ENCODE measurements at regions of chr6 and their contacts with region 1.

Region 1: GRCh38 chr6:37018198-37019064 is 13.0 kb downstream of the FGD2 start:
- DNase-seq: peak; percentile 85
- H3K4me3 ChIP-seq: no peak overlapping the region
- H3K27ac ChIP-seq: no peak overlapping the region
- H3K4me1 ChIP-seq: peaks cover 10% of the 10 kb centered on the region
- H3K27me3 ChIP-seq: no peaks in the 10 kb centered on the region
- CTCF ChIP-seq: peak; percentile 93 to 97
- POLR2A ChIP-seq: no peak

Region 2: DNA sequence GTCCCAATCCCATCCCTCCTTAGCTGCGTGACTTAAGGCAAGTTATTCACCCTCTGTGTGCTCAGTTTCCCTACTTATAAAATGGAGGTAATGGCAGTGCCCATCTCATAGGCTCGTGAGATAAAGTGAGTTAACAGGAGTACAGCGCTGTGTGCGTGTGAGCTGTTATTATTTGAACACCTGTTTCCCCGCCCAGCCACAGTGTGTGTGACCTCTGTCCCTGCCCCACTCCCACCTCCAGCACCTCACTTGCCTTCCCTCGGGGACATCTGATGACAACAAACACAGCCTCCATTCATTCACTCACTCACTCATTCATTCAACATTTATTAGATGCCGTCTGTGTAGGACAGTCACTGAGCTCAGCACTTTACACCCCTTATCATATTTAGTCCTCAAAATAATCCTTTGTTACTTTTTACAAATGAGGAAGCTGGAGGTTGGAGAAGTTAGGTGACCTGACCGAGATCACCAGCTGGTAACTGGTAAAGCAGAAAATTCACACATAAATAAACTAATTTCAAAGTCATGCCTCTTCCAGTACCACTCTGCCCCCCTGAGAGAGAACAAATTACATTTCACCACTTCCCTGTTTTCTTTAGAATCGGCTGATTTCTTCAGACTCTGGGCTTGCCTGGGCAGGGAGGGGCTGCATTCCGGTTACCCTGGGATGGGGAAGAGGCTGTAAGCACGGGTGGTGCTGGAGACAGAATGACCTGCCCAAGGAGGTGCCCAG is 237.8 kb before region 1 on chr6:
- CTCF ChIA-PET with region 1: interaction called, 11 read pairs
- POLR2A ChIA-PET with region 1: no interaction called
- dilution Hi-C with region 1: no loop called
- intact Hi-C with region 1: no loop called
- DNase-seq: no peak
- H3K4me3 ChIP-seq: no peak overlapping the region
- H3K27ac ChIP-seq: no peak overlapping the region
- H3K4me1 ChIP-seq: no peaks in the 10 kb centered on the region
- H3K27me3 ChIP-seq: no peaks in the 10 kb centered on the region
- CTCF ChIP-seq: no peak
- POLR2A ChIP-seq: no peak

Region 3: GRCh38 chr6:36885461-36886401 is 132.7 kb before region 1 on chr6 and contains the start of gene C6orf89:
- CTCF ChIA-PET with region 1: interaction called, 59 read pairs
- POLR2A ChIA-PET with region 1: no interaction called
- dilution Hi-C with region 1: no loop called
- intact Hi-C with region 1: loop called (anchors 1 kb)
- DNase-seq: peak; percentile 96
- H3K4me3 ChIP-seq: peak within 1 kb of the TSS; percentile 77 to 95 (median 84)
- H3K27ac ChIP-seq: peak within 1 kb of the TSS; percentile 76
- H3K4me1 ChIP-seq: peaks cover 12% of the 10 kb centered on the region
- H3K27me3 ChIP-seq: no peaks in the 10 kb centered on the region
- CTCF ChIP-seq: peak; percentile 78 to 84
- POLR2A ChIP-seq: peak; percentile 89
- total RNA-seq, gene C6orf89: 34.0 and 36.4 TPM in 2 replicates

Region 4: DNA sequence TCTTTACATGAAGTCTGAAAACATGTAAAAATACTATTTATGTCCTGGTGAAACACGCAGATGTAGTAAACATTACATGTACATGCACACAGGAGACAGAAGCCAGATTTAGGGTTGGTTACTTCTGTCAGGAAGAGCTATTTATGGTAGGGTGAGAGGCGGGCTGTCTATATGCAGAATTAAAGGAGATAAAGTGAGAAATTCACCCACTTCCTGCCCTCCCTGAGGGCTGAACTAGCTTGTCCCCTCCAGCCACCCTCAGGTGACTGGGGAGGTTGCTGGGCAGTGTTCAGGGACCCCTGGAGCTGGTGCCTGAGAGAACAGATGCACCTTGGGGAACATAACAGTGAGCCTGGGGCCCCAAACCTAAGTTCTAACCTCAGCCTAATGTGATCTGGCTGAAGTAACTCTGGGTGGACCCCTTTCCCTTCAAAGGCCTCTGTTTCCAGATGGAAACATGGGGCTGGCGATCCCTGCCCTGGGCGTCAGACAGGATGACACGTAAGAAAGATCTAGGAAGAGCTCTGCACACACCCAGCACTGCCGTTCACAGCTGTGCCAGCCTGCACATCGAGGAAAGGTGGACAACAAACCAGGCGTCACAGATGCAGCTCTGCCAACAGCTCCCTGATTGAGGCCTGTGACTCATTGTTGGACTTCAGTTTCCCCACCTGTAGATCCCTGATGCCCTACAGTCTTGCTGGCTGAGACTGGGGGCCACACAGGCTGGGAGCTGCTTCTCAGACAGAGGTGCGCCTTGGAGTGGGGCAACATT is 62.6 kb before region 1 on chr6:
- CTCF ChIA-PET with region 1: interaction called, 15 read pairs
- POLR2A ChIA-PET with region 1: no interaction called
- dilution Hi-C with region 1: no loop called
- intact Hi-C with region 1: no loop called
- DNase-seq: peak; percentile 29
- H3K4me3 ChIP-seq: no peak overlapping the region
- H3K27ac ChIP-seq: no peak overlapping the region
- H3K4me1 ChIP-seq: peaks cover 3% of the 10 kb centered on the region
- H3K27me3 ChIP-seq: no peaks in the 10 kb centered on the region
- CTCF ChIP-seq: no peak
- POLR2A ChIP-seq: no peak

Region 5: DNA sequence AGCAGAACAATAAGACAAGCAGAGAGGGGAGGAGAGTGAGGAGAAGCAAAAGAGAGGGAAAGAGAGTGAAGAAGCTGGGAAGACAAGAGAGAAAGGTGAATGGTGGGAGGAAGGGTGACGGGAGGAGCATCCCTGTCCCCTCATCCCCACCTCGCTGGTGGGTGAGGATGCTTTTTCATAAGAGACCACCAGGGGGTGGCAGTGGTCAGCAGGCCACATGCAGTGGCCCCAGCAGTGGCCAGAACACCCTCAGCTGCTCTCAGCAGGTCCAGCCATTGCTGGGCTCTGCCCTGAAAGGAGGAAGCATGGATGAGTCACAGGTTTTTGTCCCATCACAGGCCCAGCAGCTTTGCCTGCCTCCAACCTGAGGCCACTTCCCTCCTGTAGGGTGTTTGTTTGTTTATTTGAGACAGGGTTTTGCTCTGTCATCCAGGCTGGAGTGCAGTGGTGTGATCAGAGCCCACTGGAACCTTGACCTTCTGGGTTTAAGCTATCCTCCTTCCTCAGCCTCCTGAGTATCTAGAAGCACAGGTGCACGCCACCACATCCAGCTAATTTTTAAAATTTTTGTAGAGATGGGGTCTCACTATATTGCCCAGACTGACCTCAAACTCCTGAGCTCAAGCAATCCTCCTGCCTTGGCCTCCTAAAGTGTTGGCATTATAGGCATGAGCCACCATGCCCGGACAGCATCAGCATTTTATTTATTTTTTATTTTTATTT is 11.0 kb after region 1 on chr6:
- CTCF ChIA-PET with region 1: interaction called, 55 read pairs
- POLR2A ChIA-PET with region 1: no interaction called
- dilution Hi-C with region 1: no loop called
- intact Hi-C with region 1: no loop called
- DNase-seq: peak; percentile 77
- H3K4me3 ChIP-seq: no peak overlapping the region
- H3K27ac ChIP-seq: no peak overlapping the region
- H3K4me1 ChIP-seq: no peaks in the 10 kb centered on the region
- H3K27me3 ChIP-seq: peaks cover 0 to 3% of the 10 kb centered on the region in 2 experiments
- CTCF ChIP-seq: peak; percentile 70 to 79
- POLR2A ChIP-seq: no peak